A673 (cell line): ENCODE measurements at regions of chr2 and their contacts with region 1.

Region 1: GRCh38 chr2:9333591-9334171 is 89.6 kb downstream of the ITGB1BP1 start:
- DNase-seq: peak; percentile 89
- H3K4me3 ChIP-seq: no peak overlapping the region
- H3K27ac ChIP-seq: no peak overlapping the region
- H3K4me1 ChIP-seq: peaks cover 19% of the 10 kb centered on the region
- H3K27me3 ChIP-seq: no peaks in the 10 kb centered on the region
- CTCF ChIP-seq: peak; percentile 79

Region 2: GRCh38 chr2:9158786-9159779 is 174.6 kb before region 1 on chr2:
- CTCF ChIA-PET with region 1: interaction called, 16 read pairs
- POLR2A ChIA-PET with region 1: no interaction called
- intact Hi-C with region 1: no loop called
- DNase-seq: no peak
- H3K4me3 ChIP-seq: no peak overlapping the region
- H3K27ac ChIP-seq: no peak overlapping the region
- H3K4me1 ChIP-seq: no peaks in the 10 kb centered on the region
- H3K27me3 ChIP-seq: no peaks in the 10 kb centered on the region
- CTCF ChIP-seq: no peak

Region 3: DNA sequence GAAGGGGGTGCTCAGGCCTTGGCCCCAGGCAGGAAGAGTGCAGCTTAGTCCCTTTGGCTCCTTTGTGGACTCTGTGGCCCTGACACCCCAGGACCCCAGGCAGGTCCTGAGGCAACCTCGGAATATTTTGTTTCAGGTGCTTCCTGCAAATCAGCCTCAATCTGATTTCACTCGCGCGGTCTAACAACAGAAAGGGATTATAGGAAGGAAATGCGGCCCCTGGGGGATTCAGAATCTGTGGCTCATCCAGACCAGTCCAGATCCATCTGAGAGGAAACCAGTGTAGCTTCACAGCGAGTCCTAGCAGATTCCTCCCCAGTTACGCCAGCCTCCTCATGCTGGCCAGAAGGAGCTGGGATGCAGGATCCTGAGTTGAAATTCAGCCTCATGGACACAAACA is 356.6 kb after region 1 on chr2:
- CTCF ChIA-PET with region 1: no interaction called
- POLR2A ChIA-PET with region 1: no interaction called
- intact Hi-C with region 1: no loop called
- DNase-seq: no peak
- H3K4me3 ChIP-seq: no peak overlapping the region
- H3K27ac ChIP-seq: no peak overlapping the region
- H3K4me1 ChIP-seq: no peaks in the 10 kb centered on the region
- H3K27me3 ChIP-seq: no peaks in the 10 kb centered on the region
- CTCF ChIP-seq: no peak